PC-9 (cell line): ENCODE measurements at regions of chr12 and their contacts with region 1.

Region 1: DNA sequence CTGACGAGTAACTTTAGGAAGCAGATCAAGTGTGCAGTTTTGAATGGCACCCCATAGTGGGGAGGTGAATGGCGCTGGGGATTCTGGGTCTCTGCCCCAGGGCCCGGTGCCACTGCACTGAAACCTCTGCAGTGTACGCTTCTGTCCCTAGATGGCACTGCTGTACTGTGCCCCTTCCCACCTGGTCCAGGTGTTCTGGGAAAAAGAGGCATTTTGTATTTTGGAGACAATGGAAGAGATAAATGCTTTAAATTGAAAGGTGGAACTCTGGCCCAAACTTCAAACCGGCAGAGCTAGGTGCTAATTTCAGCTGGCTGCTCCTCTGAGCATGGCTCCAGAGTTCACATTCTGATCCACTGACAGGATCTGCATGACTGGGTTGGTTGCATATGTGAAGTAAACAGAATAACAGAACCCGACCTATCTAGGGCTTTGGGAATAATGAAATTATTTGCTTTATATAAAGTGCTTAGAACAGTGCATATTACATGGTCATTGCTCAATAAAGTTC is 52.2 kb downstream of the KRT80 start:
- DNase-seq: peak; percentile 62 to 78
- H3K4me3 ChIP-seq: no peak overlapping the region
- H3K27ac ChIP-seq: no peak overlapping the region
- H3K4me1 ChIP-seq: peaks cover 22% of the 10 kb centered on the region
- H3K27me3 ChIP-seq: no peaks in the 10 kb centered on the region
- CTCF ChIP-seq: peak; percentile 94

Region 2: GRCh38 chr12:52221912-52222457 is 82.4 kb after region 1 on chr12:
- CTCF ChIA-PET with region 1: interaction called, 3 read pairs
- POLR2A ChIA-PET with region 1: interaction called, 10 read pairs
- intact Hi-C with region 1: no loop called
- DNase-seq: peak; percentile 68 to 74
- H3K4me3 ChIP-seq: no peak overlapping the region
- H3K27ac ChIP-seq: peak overlapping the region; percentile 68
- H3K4me1 ChIP-seq: peaks cover 95% of the 10 kb centered on the region
- H3K27me3 ChIP-seq: no peaks in the 10 kb centered on the region
- CTCF ChIP-seq: peak; percentile 58